Endothelial cell of umbilical vein (primary cell): ENCODE measurements at regions of chr11 and their contacts with region 1.

Region 1: DNA sequence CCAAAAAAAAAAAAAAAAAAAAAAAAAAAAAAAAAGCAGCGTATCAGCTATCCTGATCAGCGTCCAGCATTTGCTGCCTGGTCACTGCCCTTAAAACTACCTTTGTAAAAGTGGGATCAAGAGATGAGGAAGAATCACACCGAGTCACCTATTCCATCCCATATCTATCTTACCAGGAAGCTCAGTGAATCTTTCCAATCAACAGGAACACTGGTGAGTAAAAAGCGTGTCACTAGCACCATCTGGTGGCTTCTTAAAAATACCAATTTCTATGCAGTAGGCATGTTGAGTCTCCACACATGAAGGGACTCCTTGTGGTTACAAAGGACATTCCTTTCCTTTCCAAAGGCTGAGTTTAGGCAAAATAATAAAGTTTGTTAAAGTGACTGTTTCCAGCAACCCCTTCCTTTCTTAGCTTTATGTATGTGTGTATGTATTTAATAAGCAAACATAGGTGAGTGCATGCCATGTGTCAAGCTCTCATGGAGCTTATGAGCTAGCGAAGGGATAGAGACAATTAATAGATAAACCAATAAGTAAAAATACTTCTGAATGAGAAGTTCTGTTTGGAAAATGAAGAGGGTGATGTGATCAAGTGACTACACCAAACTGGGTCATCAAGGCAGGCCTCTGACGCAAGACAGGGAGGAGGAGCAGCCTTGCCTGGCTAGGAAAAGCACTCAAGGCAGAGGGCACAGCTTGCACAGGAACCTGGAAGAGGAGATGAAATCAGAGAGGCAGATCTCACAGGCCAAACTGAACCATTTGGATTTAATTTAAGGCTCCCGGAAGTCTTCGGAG is 13.9 kb upstream of the TP53AIP1 start:
- DNase-seq: peak; percentile 77
- H3K4me3 ChIP-seq: no peak overlapping the region
- H3K27ac ChIP-seq: no peak overlapping the region
- H3K4me1 ChIP-seq: no peaks in the 10 kb centered on the region
- H3K27me3 ChIP-seq: peaks cover 10 to 23% of the 10 kb centered on the region in 2 experiments
- CTCF ChIP-seq: peak; percentile 55 to 61
- POLR2A ChIP-seq: no peak

Region 2: DNA sequence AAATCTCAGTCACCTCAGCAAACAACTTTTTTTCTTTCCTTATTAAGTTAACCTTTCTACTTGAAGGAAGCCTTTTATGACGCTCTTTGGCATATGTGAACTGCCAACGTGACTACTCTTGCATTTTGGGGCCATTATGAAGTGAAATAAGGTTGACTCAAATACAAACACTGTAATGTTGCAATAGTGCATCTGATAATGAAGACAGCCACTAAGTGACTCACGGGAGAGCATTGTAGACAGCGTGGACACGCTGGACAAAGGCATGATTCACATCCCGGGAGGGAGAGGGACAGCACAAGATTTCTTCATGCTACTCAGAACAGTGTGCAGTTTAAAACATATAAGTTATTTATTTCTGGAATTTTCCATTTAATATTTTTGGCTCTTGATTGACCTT is 930.0 kb before region 1 on chr11:
- CTCF ChIA-PET with region 1: interaction called, 6 read pairs
- POLR2A ChIA-PET with region 1: no interaction called
- dilution Hi-C with region 1: no loop called
- intact Hi-C with region 1: loop called (anchors 1 kb)
- DNase-seq: peak; percentile 81
- H3K4me3 ChIP-seq: no peak overlapping the region
- H3K27ac ChIP-seq: peak overlapping the region; percentile 39
- H3K4me1 ChIP-seq: peaks cover 25% of the 10 kb centered on the region
- H3K27me3 ChIP-seq: no peaks in the 10 kb centered on the region
- CTCF ChIP-seq: no peak
- POLR2A ChIP-seq: no peak

Region 3: DNA sequence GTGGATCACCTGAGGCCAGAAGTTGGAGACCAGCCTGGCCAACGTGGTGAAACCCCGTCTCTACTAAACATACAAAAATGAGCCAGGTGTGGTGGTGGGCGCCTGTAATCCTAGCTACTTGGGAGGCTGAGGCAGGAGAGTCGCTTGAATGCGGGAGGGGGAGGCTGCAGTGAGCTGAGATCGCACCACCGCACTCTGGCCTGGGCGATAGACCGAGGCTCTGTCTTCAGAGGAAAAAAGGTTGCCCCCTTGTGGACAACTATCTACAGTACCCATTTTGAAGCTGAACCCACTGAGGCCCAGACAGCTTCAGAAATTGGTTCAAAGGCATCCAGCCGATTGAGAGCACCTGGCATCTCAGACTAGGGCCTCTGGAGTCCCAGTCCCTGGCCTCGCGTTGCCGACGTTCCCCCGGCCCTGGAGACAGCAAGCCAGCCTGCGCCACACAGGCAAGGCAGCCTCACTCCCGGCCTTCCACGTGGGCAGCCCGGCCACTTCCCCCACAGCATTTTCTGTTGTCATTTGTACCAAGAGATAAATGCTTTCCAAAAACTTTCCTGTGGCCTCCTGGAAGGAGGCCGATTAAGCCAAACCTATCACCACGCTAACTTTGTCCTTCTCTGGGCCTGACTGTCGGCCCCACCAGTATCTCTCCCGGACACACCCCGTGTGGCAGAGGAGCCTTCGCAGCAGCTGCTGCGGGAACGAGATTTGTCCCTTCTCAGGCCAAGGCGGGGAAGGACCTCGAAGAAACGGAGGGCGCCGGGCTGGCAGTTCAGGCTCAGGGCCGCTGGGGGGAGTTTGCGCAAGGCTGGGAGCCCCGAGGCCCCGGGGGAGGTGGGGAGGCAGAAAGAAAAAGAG is 179.9 kb before region 1 on chr11:
- CTCF ChIA-PET with region 1: interaction called, 7 read pairs
- POLR2A ChIA-PET with region 1: no interaction called
- dilution Hi-C with region 1: no loop called
- intact Hi-C with region 1: loop called (anchors 10 kb)
- DNase-seq: no peak
- H3K4me3 ChIP-seq: no peak overlapping the region
- H3K27ac ChIP-seq: no peak overlapping the region
- H3K4me1 ChIP-seq: peaks cover 27% of the 10 kb centered on the region
- H3K27me3 ChIP-seq: no peaks in the 10 kb centered on the region
- CTCF ChIP-seq: peak; percentile 29 to 39
- POLR2A ChIP-seq: no peak

Region 4: DNA sequence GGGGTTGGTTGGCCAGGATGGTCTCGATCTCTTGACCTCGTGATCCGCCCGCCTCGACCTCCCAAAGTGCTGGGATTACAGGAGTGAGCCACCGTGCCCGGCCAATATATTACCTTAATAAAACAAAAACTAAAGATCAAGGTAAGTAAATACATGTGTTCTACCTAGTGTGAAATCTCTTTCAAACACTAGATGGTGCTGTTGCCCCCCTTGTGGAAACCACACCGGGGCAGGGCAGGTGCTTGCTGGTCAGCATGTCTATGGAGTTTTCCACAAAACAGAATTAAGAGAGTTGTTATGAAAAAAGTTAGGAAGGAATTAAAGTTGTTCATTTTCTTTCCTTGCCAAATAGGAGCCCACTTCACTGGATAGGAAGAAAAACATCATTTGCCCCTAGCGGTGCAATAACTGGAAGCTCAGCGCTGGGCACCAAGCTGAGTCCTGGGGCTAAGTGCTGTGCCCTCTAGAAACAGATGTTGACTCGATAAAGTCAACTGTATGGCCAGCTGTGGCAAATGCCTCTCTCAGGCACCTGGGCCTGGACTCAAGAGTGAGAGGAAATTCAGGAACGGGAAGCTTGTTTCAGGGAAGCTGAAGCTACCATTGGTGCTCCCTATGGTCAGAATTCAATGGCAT is 71.8 kb before region 1 on chr11:
- CTCF ChIA-PET with region 1: interaction called, 951 read pairs
- POLR2A ChIA-PET with region 1: interaction called, 5 read pairs
- dilution Hi-C with region 1: no loop called
- intact Hi-C with region 1: loop called (anchors 1 kb)
- DNase-seq: peak; percentile 80
- H3K4me3 ChIP-seq: no peak overlapping the region
- H3K27ac ChIP-seq: no peak overlapping the region
- H3K4me1 ChIP-seq: no peaks in the 10 kb centered on the region
- H3K27me3 ChIP-seq: peaks cover 43 to 62% of the 10 kb centered on the region in 2 experiments
- CTCF ChIP-seq: peak; percentile 59 to 63
- POLR2A ChIP-seq: no peak

Region 5: DNA sequence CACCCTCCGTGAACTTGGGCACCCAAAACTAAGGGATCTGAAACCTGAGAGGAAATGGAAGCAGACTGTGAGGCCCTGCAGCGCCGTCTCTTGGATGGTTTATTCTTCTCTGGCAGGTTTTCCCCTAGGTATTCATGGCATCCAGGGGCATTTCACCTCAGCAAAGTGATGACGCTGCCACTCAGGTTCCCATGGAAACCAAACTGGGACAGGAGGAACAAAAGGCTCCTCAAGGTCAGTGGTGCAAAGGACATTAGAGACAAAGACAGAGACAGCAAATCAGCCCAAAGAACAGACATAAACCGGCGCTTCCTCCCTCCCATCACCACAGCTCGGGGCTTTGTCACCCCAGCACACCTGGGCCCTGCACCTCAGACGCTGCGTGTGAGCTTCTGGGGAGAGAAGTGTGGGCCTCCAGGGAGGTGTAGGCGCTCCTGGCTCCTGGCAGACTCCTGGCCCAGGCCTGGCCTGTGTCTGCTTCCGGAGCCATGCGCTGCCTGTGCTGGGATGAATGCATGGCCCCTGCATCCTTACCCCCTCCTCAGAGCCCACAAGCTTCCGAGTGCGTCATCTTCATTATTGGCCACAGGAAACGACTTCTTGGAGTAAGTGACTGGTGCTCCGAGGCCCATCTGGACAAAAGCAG is 19.9 kb before region 1 on chr11:
- CTCF ChIA-PET with region 1: interaction called, 12 read pairs
- POLR2A ChIA-PET with region 1: no interaction called
- dilution Hi-C with region 1: no loop called
- intact Hi-C with region 1: no loop called
- DNase-seq: no peak
- H3K4me3 ChIP-seq: no peak overlapping the region
- H3K27ac ChIP-seq: no peak overlapping the region
- H3K4me1 ChIP-seq: no peaks in the 10 kb centered on the region
- H3K27me3 ChIP-seq: peaks cover 0 to 2% of the 10 kb centered on the region in 2 experiments
- CTCF ChIP-seq: no peak
- POLR2A ChIP-seq: no peak

Region 6: DNA sequence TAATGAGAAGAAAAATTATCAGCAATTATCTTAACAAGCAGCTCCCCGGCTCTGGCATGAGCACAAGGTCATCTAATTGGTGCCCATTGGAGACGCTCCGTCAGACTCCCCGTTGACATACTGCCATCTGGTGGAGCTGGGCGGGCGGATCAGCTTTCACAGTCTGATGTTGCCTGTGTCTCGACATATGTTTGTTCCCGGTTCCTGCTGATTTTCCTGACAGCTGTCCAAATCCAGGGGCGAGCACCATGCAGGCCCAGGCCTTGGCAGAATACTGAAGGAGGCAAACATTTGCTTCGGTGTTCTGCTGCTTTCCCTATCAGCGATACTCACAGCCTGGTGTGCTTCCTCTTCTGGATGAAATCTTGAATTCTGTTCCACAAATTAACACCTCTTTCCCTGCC is 375.3 kb after region 1 on chr11:
- CTCF ChIA-PET with region 1: interaction called, 19 read pairs
- POLR2A ChIA-PET with region 1: no interaction called
- dilution Hi-C with region 1: no loop called
- intact Hi-C with region 1: loop called (anchors 1 kb)
- DNase-seq: peak; percentile 76
- H3K4me3 ChIP-seq: no peak overlapping the region
- H3K27ac ChIP-seq: no peak overlapping the region
- H3K4me1 ChIP-seq: no peaks in the 10 kb centered on the region
- H3K27me3 ChIP-seq: no peaks in the 10 kb centered on the region
- CTCF ChIP-seq: peak; percentile 91 to 92
- POLR2A ChIP-seq: no peak